ENCODE measurements at regions of chr22 and their contacts with region 1.

Region 1: GRCh38 chr22:36369922-36370791 is 17.6 kb downstream of the MYH9 start:
- DNase-seq: peak in 3 of 5 donors; percentile 62 to 67 (median 64)
- ATAC-seq: peak; percentile 59 to 76 (median 63)
- H3K4me3 ChIP-seq: peak overlapping the region in 9 of 12 donors; percentile 7 to 39 (median 27)
- H3K27ac ChIP-seq: peak overlapping the region; percentile 50 to 99 (median 88)
- H3K4me1 ChIP-seq: peaks cover 49 to 100% (median 100%) of the 10 kb centered on the region in 12 donors
- H3K27me3 ChIP-seq: no peaks in the 10 kb centered on the region
- CTCF ChIP-seq: no peak
- POLR2A ChIP-seq: no peak

Region 2: DNA sequence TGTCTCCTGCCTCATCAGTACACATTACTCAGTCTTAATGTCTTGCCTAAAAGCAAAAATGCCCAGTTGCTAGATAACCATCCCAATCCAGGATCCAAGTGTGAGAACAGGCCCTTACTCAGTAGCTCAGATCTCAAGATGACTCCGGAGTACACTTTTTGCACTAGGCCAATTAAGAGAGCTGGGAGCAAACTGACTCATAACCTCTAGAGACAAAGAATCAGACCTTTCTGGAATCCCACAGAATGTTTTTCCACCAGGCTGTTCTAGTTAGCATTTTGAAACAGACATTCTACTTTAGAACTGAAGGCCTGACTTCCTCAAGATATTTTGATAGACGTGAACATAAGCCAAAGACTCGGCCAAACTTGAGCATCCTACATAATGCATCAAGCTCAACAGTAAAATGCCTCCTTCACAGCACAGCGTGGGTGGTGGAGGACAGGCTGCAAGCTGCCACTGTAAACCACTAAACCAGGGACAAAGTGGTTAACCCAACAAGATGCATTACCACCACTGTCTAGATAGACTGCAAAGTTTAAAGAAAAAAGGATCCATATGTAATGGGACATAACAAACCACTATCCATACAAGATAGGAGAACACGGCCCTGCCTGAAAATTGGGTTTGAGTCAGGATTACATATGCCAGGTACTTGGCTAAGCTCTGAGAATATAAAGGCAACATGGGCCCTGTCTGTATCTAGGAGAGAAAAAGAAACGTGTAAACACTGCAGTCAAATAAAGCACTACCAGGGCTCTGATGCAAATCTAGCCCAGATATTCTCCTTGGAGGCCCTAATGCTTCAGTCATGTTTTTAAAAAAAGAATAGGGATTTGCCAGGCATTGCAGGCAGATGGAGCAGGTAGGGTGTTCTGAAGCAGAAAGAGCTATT is 30.7 kb before region 1 on chr22:
- intact Hi-C with region 1: loop called in 6 of 10 experiments (anchors 5 kb)
- DNase-seq: no peak
- ATAC-seq: peak in 3 of 4 donors; percentile 16 to 53 (median 27)
- H3K4me3 ChIP-seq: no peak overlapping the region
- H3K27ac ChIP-seq: peak overlapping the region; percentile 3 to 100 (median 94)
- H3K4me1 ChIP-seq: peaks cover 46 to 100% (median 92%) of the 10 kb centered on the region in 12 donors
- H3K27me3 ChIP-seq: no peaks in the 10 kb centered on the region
- CTCF ChIP-seq: no peak
- POLR2A ChIP-seq: no peak

Region 3: DNA sequence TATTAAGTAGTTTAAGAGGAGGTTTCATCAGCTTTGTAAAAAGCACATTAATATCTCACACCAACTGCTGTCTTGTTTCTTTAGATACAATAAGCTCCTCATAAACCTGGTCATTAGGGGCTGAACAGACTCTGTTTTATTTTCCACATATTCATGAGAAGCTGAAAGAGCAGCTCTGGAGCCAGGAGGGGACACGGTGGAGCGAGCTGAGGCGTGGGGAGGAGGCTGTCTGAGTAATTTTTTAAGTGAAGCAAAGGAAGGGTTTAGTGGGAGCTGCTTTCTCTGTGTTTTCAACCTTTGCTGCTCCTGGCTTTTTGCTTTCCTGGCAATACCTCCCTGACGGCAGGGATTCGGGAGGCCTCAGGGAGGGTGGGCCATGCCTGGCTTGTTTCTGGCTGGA is 225.8 kb after region 1 on chr22:
- intact Hi-C with region 1: no loop called
- DNase-seq: no peak
- ATAC-seq: no peak
- H3K4me3 ChIP-seq: no peak overlapping the region
- H3K27ac ChIP-seq: no peak overlapping the region
- H3K4me1 ChIP-seq: no peaks in the 10 kb centered on the region
- H3K27me3 ChIP-seq: peaks cover 0 to 51% (median 9%) of the 10 kb centered on the region in 9 donors
- CTCF ChIP-seq: no peak
- POLR2A ChIP-seq: no peak